Prostate gland (tissue), 2 donors: ENCODE measurements at regions of chr10 and their contacts with region 1.

Region 1: DNA sequence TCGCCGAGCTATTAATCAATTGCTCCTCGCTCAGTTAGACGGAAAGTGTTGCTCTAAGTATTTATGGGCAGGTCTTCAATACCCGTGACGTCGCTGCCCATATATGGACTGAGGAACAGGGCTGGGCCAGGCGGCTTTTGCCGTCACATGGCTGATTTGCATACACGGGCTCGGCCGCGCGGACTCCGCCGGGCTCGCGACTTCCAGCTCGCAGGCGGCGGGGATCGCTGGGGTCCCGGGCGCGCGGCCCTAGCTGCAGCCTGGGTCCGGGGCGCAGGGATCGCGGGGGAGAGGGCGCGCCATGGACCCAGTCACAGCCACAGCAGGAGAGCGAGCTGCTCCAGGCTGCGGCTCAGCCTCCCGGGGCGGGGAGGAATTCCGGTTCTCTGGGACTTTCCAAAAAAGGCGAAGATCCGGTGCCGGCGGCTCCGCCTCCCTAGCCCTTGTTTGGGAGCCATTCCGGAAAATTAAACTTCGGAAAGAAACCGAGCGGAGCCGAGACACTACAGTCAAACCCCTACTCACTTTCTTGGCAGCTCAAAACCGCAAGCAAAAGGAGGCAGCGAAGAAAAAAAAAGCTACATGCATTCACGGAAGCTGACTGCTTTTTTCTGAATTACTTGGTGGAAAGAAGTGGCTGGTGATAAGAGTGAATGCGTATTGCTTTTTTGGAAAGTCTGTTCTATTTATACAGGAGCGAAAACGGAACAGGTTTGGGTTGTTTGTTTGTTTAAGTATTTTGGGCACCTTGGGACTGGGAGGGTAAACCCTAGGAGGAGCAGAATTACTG is at the start of gene EGR2:
- DNase-seq: peak; percentile 93
- H3K4me3 ChIP-seq: peak within 1 kb of the TSS; percentile 67 to 80
- H3K27ac ChIP-seq: peak within 1 kb of the TSS; percentile 83 to 85
- H3K4me1 ChIP-seq: peaks cover 6% of the 10 kb centered on the region
- H3K27me3 ChIP-seq: peaks cover 9% of the 10 kb centered on the region
- CTCF ChIP-seq: no peak
- POLR2A ChIP-seq: no peak
- total RNA-seq, gene EGR2: 2.5 to 4.6 TPM

Region 2: GRCh38 chr10:62437696-62438095 is 378.8 kb before region 1 on chr10:
- intact Hi-C with region 1: loop called (anchors 5 kb)
- DNase-seq: peak; percentile 22
- H3K4me3 ChIP-seq: no peak overlapping the region
- H3K27ac ChIP-seq: no peak overlapping the region
- H3K4me1 ChIP-seq: no peaks in the 10 kb centered on the region
- H3K27me3 ChIP-seq: no peaks in the 10 kb centered on the region
- CTCF ChIP-seq: peak; percentile 52 to 82 (median 75)
- POLR2A ChIP-seq: no peak

Region 3: GRCh38 chr10:62594093-62594520 is 222.4 kb before region 1 on chr10:
- intact Hi-C with region 1: loop called (anchors 5 kb)
- DNase-seq: peak; percentile 23
- H3K4me3 ChIP-seq: no peak overlapping the region
- H3K27ac ChIP-seq: no peak overlapping the region
- H3K4me1 ChIP-seq: no peaks in the 10 kb centered on the region
- H3K27me3 ChIP-seq: no peaks in the 10 kb centered on the region
- CTCF ChIP-seq: peak; percentile 35 to 85 (median 73)
- POLR2A ChIP-seq: no peak

Region 4: DNA sequence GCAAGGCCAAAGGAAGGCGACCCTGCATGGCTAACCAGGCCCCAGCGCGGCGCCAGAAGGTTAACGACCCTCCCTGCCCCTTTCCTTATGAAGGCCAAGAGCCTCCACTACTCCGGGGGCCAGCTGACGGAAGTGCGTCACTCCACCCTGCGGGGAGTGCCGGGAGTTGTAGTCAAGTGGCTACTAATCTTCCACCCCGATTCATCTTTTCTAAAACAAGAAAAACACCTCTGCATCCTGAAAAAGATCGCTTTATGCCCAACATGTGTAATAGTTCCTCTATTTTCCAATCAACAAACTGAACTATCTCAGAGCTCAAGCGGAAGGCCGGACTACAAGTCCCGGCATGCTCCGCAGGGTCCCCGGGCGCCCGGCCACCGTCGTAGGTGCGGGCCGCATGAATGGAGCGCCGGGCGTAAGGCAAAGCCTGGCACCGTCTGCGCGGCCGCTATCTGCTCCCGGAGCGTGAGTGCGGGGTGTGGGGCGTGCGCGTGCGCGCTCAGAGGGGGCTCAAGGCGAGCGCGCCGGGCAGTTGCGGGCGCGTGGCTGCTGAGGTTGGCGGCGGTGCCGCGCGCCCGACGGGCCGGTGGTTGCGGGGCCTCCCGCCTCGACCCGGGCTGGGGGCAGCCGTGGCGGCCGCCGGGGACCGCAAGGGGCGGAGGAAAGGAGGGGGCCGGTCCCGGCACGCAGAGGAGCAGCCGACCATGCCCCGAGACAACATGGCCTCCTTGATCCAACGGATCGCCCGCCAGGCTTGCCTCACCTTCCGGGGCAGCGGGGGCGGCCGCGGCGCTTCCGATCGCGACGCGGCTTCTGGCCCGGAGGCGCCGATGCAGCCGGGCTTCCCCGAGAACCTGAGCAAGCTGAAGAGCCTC is 11.9 kb before region 1 on chr10 and contains the start of gene ADO:
- intact Hi-C with region 1: loop called (anchors 1 kb)
- DNase-seq: peak; percentile 70
- H3K4me3 ChIP-seq: peak within 1 kb of the TSS; percentile 74 to 79
- H3K27ac ChIP-seq: peak within 1 kb of the TSS; percentile 89 to 94
- H3K4me1 ChIP-seq: peaks cover 3% of the 10 kb centered on the region
- H3K27me3 ChIP-seq: no peaks in the 10 kb centered on the region
- CTCF ChIP-seq: peak in 1 of 4 experiments; percentile 10
- POLR2A ChIP-seq: no peak
- total RNA-seq, gene ADO: 25.0 to 37.4 TPM

Region 5: DNA sequence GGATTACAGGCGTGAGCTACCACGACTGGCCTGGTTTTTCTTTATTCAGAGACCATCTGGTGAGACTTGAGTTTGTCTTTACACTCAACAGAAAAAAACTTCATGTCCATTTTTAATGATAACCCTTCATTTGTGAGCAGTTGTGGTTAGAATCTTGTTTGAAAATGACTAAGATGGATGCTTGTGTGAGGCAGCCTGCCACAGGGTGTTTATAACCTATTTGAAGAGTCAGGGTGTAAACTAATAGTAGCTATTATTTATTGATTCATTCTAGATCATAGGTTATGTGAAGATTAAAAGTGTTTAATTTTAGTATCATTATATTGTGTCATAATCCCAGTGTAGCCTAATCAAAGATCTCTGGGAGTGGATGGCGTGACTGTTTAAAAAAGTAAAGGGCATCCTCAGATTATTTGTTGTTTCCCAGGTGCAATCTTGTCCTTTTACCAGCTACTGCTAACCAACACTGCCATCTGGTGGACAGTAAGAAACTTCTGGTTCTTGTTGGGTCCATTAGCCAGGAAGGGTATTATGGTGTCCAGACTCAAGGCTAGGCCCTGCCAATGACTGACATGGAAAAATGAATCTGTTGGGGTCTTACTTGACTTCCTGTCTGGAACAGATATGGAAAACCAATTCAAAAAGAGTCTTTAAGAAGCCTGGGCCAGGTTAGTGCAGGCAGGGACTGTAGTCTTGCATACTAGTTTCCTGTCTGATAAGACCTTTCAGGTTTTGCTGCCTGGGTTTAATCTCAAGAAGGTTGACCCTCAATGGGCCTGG is 341.5 kb after region 1 on chr10:
- intact Hi-C with region 1: loop called (anchors 5 kb)
- DNase-seq: peak; percentile 34
- H3K4me3 ChIP-seq: no peak overlapping the region
- H3K27ac ChIP-seq: no peak overlapping the region
- H3K4me1 ChIP-seq: no peaks in the 10 kb centered on the region
- H3K27me3 ChIP-seq: no peaks in the 10 kb centered on the region
- CTCF ChIP-seq: peak; percentile 67 to 81 (median 80)
- POLR2A ChIP-seq: no peak

Region 6: DNA sequence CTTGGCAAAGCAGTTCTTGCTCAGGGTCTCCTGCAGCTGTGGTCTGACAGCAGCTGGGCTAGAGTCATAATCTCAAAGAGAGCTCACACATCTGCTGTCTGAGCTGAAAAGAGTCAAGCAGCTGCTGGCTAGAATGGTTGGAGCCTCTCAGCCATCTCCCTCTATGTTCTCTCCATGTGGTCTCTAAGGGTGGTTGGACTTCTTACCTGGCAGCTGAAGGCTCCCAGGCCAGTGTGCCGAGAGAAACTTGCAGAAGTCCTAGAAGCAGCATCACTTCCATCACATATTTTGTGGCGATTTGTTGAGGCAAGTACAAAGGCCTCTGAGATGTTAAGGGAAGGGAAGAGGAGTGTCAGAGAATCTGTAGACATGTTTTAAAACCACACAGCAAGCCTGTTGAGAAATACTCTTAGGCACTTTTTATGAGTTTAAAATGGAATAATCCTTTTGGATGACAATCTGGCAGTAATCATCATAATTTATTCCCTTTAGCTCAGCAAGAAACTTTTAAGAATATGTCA is 797.9 kb after region 1 on chr10:
- intact Hi-C with region 1: no loop called
- DNase-seq: no peak
- H3K4me3 ChIP-seq: no peak overlapping the region
- H3K27ac ChIP-seq: no peak overlapping the region
- H3K4me1 ChIP-seq: no peaks in the 10 kb centered on the region
- H3K27me3 ChIP-seq: no peaks in the 10 kb centered on the region
- CTCF ChIP-seq: no peak
- POLR2A ChIP-seq: no peak